ENCODE measurements at regions of chrX and their contacts with region 1.

Region 1: GRCh38 chrX:107227780-107228485 is 21.5 kb downstream of the DNAAF6 start:
- DNase-seq: no peak
- ATAC-seq: no peak
- H3K4me3 ChIP-seq: no peak overlapping the region
- H3K27ac ChIP-seq: no peak overlapping the region
- H3K4me1 ChIP-seq: no peaks in the 10 kb centered on the region
- H3K27me3 ChIP-seq: no peaks in the 10 kb centered on the region
- CTCF ChIP-seq: no peak
- EP300 ChIP-seq: no peak
- POLR2A ChIP-seq: no peak
- RAD21 ChIP-seq: no peak

Region 2: DNA sequence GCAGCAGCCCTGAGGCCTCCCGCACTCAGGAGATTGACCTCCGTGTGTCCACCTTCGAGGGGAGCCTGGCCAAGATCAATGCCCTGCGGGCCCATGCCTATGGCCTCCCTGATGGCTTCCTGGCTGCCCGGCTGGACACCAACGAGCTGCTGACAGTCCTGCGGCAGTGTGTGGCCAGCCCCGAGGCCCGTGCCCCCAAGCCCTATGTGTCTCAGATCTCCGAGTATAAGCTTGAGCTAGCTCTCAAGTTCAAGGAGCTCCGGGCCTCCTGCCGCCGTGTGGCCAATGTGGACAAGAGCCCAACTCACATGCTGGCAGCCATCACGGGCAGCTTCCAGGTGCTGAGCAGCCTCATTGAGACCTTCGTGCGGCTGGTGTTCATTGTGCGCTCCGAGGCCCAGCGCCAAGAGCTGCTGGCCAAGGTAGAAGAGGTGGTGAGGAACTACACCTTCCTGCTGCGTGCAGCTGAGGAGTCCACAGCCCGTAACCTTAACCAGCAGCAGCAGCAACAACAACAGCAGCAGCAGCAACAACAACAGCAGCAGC is 374.8 kb after region 1 on chrX:
- CTCF ChIA-PET with region 1: no interaction called
- POLR2A ChIA-PET with region 1: no interaction called
- in situ Hi-C with region 1: no loop called
- intact Hi-C with region 1: loop called (anchors 5 kb)
- DNase-seq: no peak
- ATAC-seq: peak; percentile 37; the same call in 2 of the 3 replicates
- H3K4me3 ChIP-seq: no peak overlapping the region
- H3K27ac ChIP-seq: no peak overlapping the region
- H3K4me1 ChIP-seq: no peaks in the 10 kb centered on the region
- H3K27me3 ChIP-seq: no peaks in the 10 kb centered on the region; a peak in 1 of 5 replicates
- CTCF ChIP-seq: no peak
- EP300 ChIP-seq: no peak
- POLR2A ChIP-seq: no peak
- RAD21 ChIP-seq: no peak